ENCODE measurements at regions of chr2 and their contacts with region 1.

Region 1: GRCh38 chr2:201909961-201910361 is 103.6 kb downstream of the CDK15 start:
- DNase-seq: no peak
- H3K4me3 ChIP-seq: no peak overlapping the region
- H3K4me3 Mint-ChIP-seq: no peak overlapping the region
- H3K27ac Mint-ChIP-seq: peak overlapping the region; percentile 35
- H3K4me1 ChIP-seq: peaks cover 61% of the 10 kb centered on the region
- H3K4me1 Mint-ChIP-seq: peaks cover 41% of the 10 kb centered on the region
- H3K27me3 ChIP-seq: no peaks in the 10 kb centered on the region
- H3K27me3 Mint-ChIP-seq: no peaks in the 10 kb centered on the region
- CTCF ChIP-seq: no peak

Region 2: DNA sequence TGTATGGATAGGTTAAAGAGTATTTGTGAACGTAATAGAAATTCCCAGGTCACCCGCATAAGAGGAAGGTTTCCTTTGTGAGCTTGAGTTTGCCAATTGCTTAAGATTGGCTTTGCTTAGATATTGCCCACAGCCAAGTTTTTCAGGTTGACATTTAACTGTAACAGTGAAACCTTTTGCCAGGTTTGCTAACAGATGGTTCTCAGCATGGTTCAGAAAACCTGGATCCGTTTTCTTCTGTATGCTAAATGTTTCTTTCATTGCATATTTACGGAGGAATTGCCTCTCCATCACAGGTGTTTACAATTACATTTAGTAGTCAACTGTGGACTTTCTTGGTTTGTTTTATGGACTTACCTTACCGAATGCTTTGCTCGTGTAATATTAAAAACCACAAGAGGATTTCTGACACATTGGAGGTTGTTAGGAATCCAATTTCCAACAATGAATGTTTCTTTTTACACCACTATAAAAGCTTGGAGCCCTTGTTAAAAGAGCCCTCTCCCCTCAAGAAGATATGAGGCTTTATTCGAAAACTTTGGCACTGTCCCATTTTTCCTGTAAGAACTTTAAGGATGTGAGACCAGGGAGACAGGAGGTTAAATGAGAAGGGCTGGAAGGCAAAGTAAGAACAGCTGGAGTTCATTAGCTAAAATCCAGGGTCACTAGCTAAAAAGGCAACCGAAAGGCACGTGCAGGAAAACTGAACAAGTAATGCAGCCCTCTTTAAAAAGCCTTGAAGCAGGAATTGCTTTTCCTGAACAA is 95.8 kb before region 1 on chr2:
- CTCF ChIA-PET with region 1: no interaction called
- POLR2A ChIA-PET with region 1: no interaction called
- intact Hi-C with region 1: no loop called
- DNase-seq: no peak
- H3K4me3 ChIP-seq: no peak overlapping the region
- H3K4me3 Mint-ChIP-seq: no peak overlapping the region
- H3K27ac Mint-ChIP-seq: no peak overlapping the region
- H3K4me1 ChIP-seq: peaks cover 19% of the 10 kb centered on the region
- H3K4me1 Mint-ChIP-seq: peaks cover 14% of the 10 kb centered on the region
- H3K27me3 ChIP-seq: no peaks in the 10 kb centered on the region; the same call in 1 of the 2 replicates
- H3K27me3 Mint-ChIP-seq: no peaks in the 10 kb centered on the region
- CTCF ChIP-seq: no peak

Region 3: DNA sequence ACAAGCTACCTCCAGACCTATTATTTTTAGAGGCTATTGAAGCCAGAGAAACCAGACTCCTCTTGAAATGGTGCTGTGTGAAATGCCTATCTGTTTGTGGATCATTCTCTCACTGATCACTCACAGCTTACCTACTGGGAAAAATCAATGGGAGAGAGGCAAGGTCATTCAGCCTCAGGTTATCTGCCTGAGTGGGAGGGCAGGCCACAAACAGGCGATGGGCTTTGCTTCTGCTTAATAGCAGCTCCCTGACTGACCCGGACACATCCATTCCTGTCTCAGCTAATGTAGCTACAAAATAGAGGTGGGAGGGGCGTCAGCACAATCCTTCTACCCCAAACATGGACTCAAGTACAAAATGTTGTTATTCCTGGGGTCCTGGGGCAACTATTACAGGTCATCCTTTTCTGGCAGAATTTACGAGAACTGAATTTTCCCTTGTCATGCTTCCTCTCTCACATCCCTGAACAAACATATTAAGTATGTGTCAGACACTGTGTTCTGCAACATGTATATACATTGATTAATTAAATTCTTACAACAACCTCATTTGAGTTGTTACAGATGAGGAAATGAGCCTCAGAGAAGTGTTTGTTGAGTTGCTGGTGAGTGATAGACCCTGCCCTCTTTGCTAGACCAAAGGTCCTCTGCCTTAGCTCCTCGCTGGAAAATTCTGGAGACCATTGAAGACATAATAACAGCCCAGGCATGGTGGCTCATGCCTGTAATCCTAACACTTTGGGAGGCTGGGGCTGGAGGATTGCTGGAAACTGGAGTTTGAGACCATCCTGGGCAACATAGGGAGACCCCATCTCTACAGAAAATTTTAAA is 43.1 kb before region 1 on chr2:
- CTCF ChIA-PET with region 1: no interaction called
- POLR2A ChIA-PET with region 1: interaction called, 3 read pairs
- intact Hi-C with region 1: loop called (anchors 2 kb)
- DNase-seq: peak; percentile 43 to 75
- H3K4me3 ChIP-seq: no peak overlapping the region
- H3K4me3 Mint-ChIP-seq: peak overlapping the region; percentile 43
- H3K27ac Mint-ChIP-seq: peak overlapping the region; percentile 80
- H3K4me1 ChIP-seq: peaks cover 33% of the 10 kb centered on the region
- H3K4me1 Mint-ChIP-seq: peaks cover 36% of the 10 kb centered on the region
- H3K27me3 ChIP-seq: no peaks in the 10 kb centered on the region
- H3K27me3 Mint-ChIP-seq: no peaks in the 10 kb centered on the region
- CTCF ChIP-seq: no peak

Measured in Caco-2 (cell line).